Endothelial cell of umbilical vein (primary cell): ENCODE measurements at regions of chr11 and their contacts with region 1.

Region 1: DNA sequence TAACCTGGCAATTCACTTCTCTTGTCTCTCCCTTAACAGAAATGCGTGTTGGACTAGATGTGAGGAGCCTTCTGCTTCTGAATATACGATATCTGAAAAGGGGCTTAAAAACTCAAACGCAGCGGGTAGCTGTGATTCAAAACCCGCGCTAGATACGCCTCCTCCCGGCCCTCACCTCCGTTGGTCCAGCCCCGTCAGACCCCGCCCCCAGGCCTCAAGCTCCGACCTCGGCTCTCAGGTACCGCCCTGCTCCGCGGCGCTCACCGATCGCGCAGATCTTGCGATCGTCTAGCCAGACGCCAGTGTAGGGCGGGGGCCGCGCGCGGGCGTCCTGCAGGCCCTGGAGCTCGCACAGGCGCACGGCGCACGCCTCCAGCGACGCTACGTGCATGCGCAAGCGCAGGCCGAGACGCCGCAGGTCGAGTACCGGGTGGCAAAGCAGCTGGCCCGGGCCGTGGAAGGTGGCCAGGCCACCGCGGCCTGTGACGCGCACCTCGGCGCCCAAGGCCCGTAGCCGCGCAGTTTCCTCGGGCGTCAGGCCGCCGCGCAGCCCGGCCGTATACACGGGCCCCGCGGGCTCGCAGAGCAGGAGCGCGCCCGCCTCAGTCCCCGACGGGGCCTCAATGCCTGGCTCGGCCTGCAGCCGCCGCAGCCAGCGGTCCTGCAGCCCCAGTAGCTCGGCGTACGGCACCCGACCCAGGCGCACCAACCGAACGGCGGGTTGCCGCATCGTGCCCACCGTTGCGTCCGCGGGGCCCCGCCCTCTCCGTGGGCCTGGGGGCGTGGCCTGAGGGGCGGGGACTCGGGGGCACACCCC is at the start of gene LIPT2:
- DNase-seq: peak; percentile 98
- H3K4me3 ChIP-seq: peak within 1 kb of the TSS; percentile 4 to 69 (median 52)
- H3K27ac ChIP-seq: peak within 1 kb of the TSS; percentile 14
- H3K4me1 ChIP-seq: peaks cover 4% of the 10 kb centered on the region
- H3K27me3 ChIP-seq: peaks cover 3 to 7% of the 10 kb centered on the region in 2 experiments
- CTCF ChIP-seq: no peak
- POLR2A ChIP-seq: peak; percentile 85
- total RNA-seq, gene LIPT2: 1.7 and 3.2 TPM in 2 replicates

Region 2: GRCh38 chr11:74427385-74427886 is 65.7 kb before region 1 on chr11:
- CTCF ChIA-PET with region 1: no interaction called
- POLR2A ChIA-PET with region 1: no interaction called
- dilution Hi-C with region 1: no loop called
- intact Hi-C with region 1: no loop called
- DNase-seq: peak; percentile 81
- H3K4me3 ChIP-seq: no peak overlapping the region
- H3K27ac ChIP-seq: peak overlapping the region; percentile 73
- H3K4me1 ChIP-seq: peaks cover 14% of the 10 kb centered on the region
- H3K27me3 ChIP-seq: no peaks in the 10 kb centered on the region
- CTCF ChIP-seq: no peak
- POLR2A ChIP-seq: no peak

Region 3: GRCh38 chr11:74559110-74559933 is 66.1 kb after region 1 on chr11:
- CTCF ChIA-PET with region 1: no interaction called
- POLR2A ChIA-PET with region 1: no interaction called
- dilution Hi-C with region 1: no loop called
- intact Hi-C with region 1: loop called (anchors 1 kb)
- DNase-seq: peak; percentile 93
- H3K4me3 ChIP-seq: no peak overlapping the region
- H3K27ac ChIP-seq: peak overlapping the region; percentile 18
- H3K4me1 ChIP-seq: peaks cover 16% of the 10 kb centered on the region
- H3K27me3 ChIP-seq: no peaks in the 10 kb centered on the region
- CTCF ChIP-seq: no peak
- POLR2A ChIP-seq: no peak